A673 (cell line): ENCODE measurements at regions of chr5 and their contacts with region 1.

Region 1: DNA sequence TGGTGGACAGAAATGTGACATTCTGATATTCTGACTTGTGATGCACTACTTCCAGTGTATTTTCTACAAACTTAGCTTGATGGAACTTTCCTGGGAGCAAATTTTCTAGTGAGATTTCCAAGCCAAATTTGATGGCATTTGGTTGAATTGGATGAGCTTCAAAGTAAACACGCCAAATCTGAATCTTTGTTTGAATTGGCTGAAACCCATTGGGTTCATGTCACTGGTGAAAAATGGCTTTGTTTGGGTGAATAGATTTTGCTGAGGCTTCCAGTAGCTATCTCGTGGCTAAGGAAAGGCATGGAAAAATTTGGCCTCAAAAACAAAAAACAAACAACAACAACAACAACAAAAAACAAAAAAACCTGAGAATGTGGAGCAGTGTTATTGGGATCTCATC is 271.1 kb upstream of the RPS23 start:
- DNase-seq: no peak
- H3K4me3 ChIP-seq: no peak overlapping the region
- H3K27ac ChIP-seq: no peak overlapping the region
- H3K4me1 ChIP-seq: no peaks in the 10 kb centered on the region
- H3K27me3 ChIP-seq: no peaks in the 10 kb centered on the region
- CTCF ChIP-seq: no peak

Region 2: GRCh38 chr5:82628364-82628910 is 79.2 kb after region 1 on chr5:
- CTCF ChIA-PET with region 1: no interaction called
- POLR2A ChIA-PET with region 1: no interaction called
- intact Hi-C with region 1: no loop called
- DNase-seq: no peak
- H3K4me3 ChIP-seq: no peak overlapping the region
- H3K27ac ChIP-seq: no peak overlapping the region
- H3K4me1 ChIP-seq: no peaks in the 10 kb centered on the region
- H3K27me3 ChIP-seq: no peaks in the 10 kb centered on the region
- CTCF ChIP-seq: no peak

Region 3: DNA sequence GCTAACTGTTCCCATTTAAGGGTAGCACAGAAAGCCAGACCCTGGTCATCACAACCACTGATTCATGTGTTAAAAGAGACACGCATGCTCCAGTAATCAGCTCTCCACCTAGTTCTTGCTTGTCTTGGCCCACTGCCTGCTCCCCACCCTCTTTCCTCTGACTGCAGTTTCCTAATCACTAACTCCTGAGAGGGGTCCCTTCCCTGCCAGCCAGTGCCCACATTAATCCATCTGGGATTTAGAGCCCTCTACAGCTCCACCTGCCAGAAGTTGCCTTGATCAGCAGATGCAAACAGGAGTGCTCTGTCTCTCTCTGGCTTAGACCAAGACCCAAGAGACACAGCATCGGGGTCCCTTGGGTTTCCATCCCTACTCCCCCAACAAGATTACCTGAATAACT is 145.6 kb after region 1 on chr5:
- CTCF ChIA-PET with region 1: no interaction called
- POLR2A ChIA-PET with region 1: interaction called, 11 read pairs
- intact Hi-C with region 1: no loop called
- DNase-seq: no peak
- H3K4me3 ChIP-seq: no peak overlapping the region
- H3K27ac ChIP-seq: no peak overlapping the region
- H3K4me1 ChIP-seq: no peaks in the 10 kb centered on the region
- H3K27me3 ChIP-seq: no peaks in the 10 kb centered on the region
- CTCF ChIP-seq: no peak